Naive thymus-derived CD4-positive, alpha-beta T cell (primary cell): ENCODE measurements at regions of chr10 and their contacts with region 1.

Region 1: GRCh38 chr10:88091490-88092105 is 228.2 kb downstream of the PTEN start:
- DNase-seq: peak in 8 of 9 donors; percentile 64 to 85 (median 76)
- ATAC-seq: peak; percentile 95
- H3K4me3 ChIP-seq: no peak overlapping the region
- H3K4me3 Mint-ChIP-seq: peak overlapping the region; percentile 18 to 72 (median 52)
- H3K27ac ChIP-seq: peak overlapping the region; percentile 53
- H3K27ac Mint-ChIP-seq: peak overlapping the region; percentile 76 to 94 (median 90)
- H3K4me1 ChIP-seq: peaks cover 33 to 36% of the 10 kb centered on the region in 2 donors
- H3K4me1 Mint-ChIP-seq: peaks cover 35 to 64% (median 42%) of the 10 kb centered on the region in 7 donors
- H3K27me3 ChIP-seq: no peaks in the 10 kb centered on the region
- H3K27me3 Mint-ChIP-seq: peaks cover 0 to 49% (median 0%) of the 10 kb centered on the region in 5 donors

Region 2: DNA sequence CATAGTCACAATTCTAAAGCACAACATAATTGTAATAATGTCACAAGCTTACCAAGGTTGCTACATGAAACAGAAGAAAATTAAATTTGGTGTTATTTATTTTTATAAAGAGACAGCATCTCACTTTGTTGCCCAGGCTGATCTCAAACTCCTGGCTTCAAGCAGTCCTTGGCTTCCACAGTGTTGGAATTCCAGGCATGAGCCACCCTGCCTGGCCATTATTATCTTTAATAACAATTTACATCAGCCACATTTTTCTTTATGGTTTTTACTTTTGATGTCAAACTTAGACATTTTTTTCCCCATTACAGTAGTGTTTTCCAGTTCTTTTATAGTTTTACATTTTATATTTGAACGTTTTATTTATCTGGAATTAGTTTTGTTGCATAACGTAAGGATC is 1288.4 kb before region 1 on chr10:
- CTCF ChIA-PET with region 1: no interaction called
- POLR2A ChIA-PET with region 1: no interaction called
- intact Hi-C with region 1: no loop called
- DNase-seq: no peak
- ATAC-seq: no peak
- H3K4me3 ChIP-seq: no peak overlapping the region
- H3K4me3 Mint-ChIP-seq: no peak overlapping the region
- H3K27ac ChIP-seq: no peak overlapping the region
- H3K27ac Mint-ChIP-seq: no peak overlapping the region
- H3K4me1 ChIP-seq: no peaks in the 10 kb centered on the region
- H3K4me1 Mint-ChIP-seq: peaks cover 0 to 15% (median 12%) of the 10 kb centered on the region in 7 donors
- H3K27me3 ChIP-seq: no peaks in the 10 kb centered on the region
- H3K27me3 Mint-ChIP-seq: no peaks in the 10 kb centered on the region

Region 3: DNA sequence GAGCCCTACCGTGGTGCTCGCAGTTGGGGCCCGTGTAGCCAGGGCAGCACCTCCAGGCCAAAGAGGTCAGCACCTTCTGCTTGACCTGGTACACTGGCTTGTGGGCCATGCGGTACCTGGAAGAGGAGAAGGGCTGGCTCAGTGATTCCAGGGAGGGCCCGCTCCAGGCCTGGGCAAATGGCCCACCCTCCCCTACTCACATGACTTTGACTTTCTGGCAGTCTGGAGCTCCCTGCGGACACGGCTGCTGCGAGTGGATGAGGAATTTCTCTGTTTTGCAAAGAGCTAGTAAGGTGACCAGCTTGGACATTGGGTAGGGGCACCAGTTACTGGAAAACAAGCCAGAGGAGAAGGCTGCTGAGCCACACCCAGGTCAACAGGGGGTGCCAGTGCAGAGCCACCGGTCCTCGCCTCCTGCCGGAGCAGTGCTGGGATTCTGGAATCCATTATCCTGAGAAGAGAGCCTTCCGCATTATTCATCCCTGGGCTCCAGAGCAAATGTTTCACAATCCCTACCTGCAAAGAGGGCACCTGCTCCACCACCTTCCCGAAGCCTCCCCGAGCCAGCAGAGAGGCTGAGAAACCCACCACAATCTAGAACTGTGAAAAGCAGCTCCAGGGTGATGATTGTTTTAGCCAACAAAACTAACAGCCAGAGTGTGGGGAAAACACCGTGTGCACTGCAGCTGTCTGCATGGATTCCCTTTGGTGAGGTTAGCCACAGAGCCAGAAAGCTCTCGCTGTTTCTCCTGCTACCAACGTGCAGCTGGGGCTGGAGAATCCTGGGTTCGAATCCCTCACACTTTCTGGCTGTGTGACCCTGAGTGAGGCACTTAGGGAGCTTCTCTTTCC is 1146.0 kb before region 1 on chr10:
- CTCF ChIA-PET with region 1: no interaction called
- POLR2A ChIA-PET with region 1: no interaction called
- intact Hi-C with region 1: no loop called
- DNase-seq: peak in 1 of 9 donors; percentile 10
- ATAC-seq: no peak
- H3K4me3 ChIP-seq: no peak overlapping the region
- H3K4me3 Mint-ChIP-seq: peak overlapping the region in 2 of 10 donors; percentile 20 to 31
- H3K27ac ChIP-seq: no peak overlapping the region
- H3K27ac Mint-ChIP-seq: no peak overlapping the region
- H3K4me1 ChIP-seq: peaks cover 0 to 9% of the 10 kb centered on the region in 2 donors
- H3K4me1 Mint-ChIP-seq: peaks cover 16 to 38% (median 20%) of the 10 kb centered on the region in 7 donors
- H3K27me3 ChIP-seq: no peaks in the 10 kb centered on the region
- H3K27me3 Mint-ChIP-seq: peaks cover 0 to 6% (median 0%) of the 10 kb centered on the region in 5 donors

Region 4: GRCh38 chr10:87973635-87974034 is 118.0 kb before region 1 on chr10:
- CTCF ChIA-PET with region 1: no interaction called
- POLR2A ChIA-PET with region 1: interaction called, 3 read pairs
- intact Hi-C with region 1: loop called in 1 of 2 experiments (anchors 5 kb)
- DNase-seq: no peak
- ATAC-seq: no peak
- H3K4me3 ChIP-seq: no peak overlapping the region
- H3K4me3 Mint-ChIP-seq: no peak overlapping the region
- H3K27ac ChIP-seq: no peak overlapping the region
- H3K27ac Mint-ChIP-seq: no peak overlapping the region
- H3K4me1 ChIP-seq: no peaks in the 10 kb centered on the region
- H3K4me1 Mint-ChIP-seq: peaks cover 0 to 21% (median 3%) of the 10 kb centered on the region in 7 donors
- H3K27me3 ChIP-seq: no peaks in the 10 kb centered on the region
- H3K27me3 Mint-ChIP-seq: no peaks in the 10 kb centered on the region

Region 5: GRCh38 chr10:88114368-88114767 is 22.8 kb after region 1 on chr10:
- CTCF ChIA-PET with region 1: interaction called, 9 read pairs
- POLR2A ChIA-PET with region 1: interaction called, 3 read pairs
- intact Hi-C with region 1: loop called in 1 of 2 experiments (anchors 1 kb)
- DNase-seq: peak in 5 of 9 donors; percentile 11 to 48 (median 37)
- ATAC-seq: peak; percentile 74
- H3K4me3 ChIP-seq: no peak overlapping the region
- H3K4me3 Mint-ChIP-seq: peak overlapping the region in 5 of 10 donors; percentile 3 to 52 (median 32)
- H3K27ac ChIP-seq: no peak overlapping the region
- H3K27ac Mint-ChIP-seq: no peak overlapping the region
- H3K4me1 ChIP-seq: peaks cover 11 to 26% of the 10 kb centered on the region in 2 donors
- H3K4me1 Mint-ChIP-seq: peaks cover 4 to 32% (median 15%) of the 10 kb centered on the region in 7 donors
- H3K27me3 ChIP-seq: no peaks in the 10 kb centered on the region
- H3K27me3 Mint-ChIP-seq: peaks cover 0 to 12% (median 0%) of the 10 kb centered on the region in 5 donors

Region 6: DNA sequence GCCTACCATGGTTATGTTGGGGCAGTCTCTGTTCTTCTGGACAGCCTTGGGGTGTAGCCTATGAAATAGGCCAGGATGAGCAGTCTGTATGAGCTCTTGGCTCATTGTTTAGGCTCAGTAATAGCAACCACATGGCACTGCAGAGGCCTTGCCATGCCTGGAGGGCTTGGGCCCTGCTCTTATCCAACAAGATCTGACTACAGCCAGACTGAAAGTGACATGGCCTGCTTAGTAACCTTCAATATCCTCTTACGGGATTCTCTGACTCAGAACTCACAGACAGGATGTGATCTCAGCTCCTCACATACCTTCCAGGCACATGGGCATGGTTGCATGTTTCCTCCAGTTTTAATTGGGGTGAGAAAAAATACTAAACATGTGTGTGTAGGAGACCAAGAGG is 61.1 kb after region 1 on chr10:
- CTCF ChIA-PET with region 1: no interaction called
- POLR2A ChIA-PET with region 1: no interaction called
- intact Hi-C with region 1: loop called in 1 of 2 experiments (anchors 1 kb)
- DNase-seq: peak in 5 of 9 donors; percentile 3 to 38 (median 10)
- ATAC-seq: peak; percentile 66
- H3K4me3 ChIP-seq: no peak overlapping the region
- H3K4me3 Mint-ChIP-seq: peak overlapping the region in 1 of 10 donors; percentile 67
- H3K27ac ChIP-seq: no peak overlapping the region
- H3K27ac Mint-ChIP-seq: peak overlapping the region in 4 of 9 donors; percentile 4 to 91 (median 79)
- H3K4me1 ChIP-seq: no peaks in the 10 kb centered on the region
- H3K4me1 Mint-ChIP-seq: peaks cover 4 to 25% (median 13%) of the 10 kb centered on the region in 7 donors
- H3K27me3 ChIP-seq: no peaks in the 10 kb centered on the region
- H3K27me3 Mint-ChIP-seq: no peaks in the 10 kb centered on the region

Region 7: GRCh38 chr10:88186335-88186734 is 94.7 kb after region 1 on chr10:
- CTCF ChIA-PET with region 1: no interaction called
- POLR2A ChIA-PET with region 1: no interaction called
- intact Hi-C with region 1: no loop called
- DNase-seq: no peak
- ATAC-seq: no peak
- H3K4me3 ChIP-seq: no peak overlapping the region
- H3K4me3 Mint-ChIP-seq: no peak overlapping the region
- H3K27ac ChIP-seq: no peak overlapping the region
- H3K27ac Mint-ChIP-seq: no peak overlapping the region
- H3K4me1 ChIP-seq: no peaks in the 10 kb centered on the region
- H3K4me1 Mint-ChIP-seq: peaks cover 0 to 13% (median 4%) of the 10 kb centered on the region in 7 donors
- H3K27me3 ChIP-seq: no peaks in the 10 kb centered on the region
- H3K27me3 Mint-ChIP-seq: peaks cover 0 to 15% (median 0%) of the 10 kb centered on the region in 5 donors

Region 8: DNA sequence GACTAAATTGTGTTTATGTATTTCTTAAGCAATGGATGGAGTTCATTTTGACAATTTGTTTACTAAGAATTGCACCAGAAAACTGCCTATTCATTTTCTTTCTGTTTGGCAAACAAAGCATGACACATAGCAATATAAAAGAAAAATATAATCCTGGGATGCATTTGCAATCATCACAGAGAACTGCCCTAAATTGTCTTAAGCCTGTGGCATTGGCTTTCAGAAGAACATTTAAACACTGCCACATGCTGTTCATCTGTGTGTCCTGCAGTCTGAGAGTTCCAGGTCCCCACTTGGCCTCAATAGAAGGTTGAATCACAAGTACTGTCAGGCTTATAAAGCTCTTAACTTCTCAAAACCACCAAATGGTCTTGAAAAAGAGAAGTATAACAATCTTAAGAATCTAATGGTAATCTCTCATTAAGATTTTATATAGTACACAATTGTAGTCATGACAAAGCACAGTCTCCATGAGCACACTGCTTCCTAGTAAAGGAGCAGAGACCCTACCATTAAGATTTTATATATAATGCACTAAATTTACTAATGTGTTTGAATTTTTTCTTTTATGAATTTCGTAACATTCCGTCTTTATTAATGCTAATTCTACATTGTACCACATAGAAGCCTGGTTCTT is 461.6 kb after region 1 on chr10:
- CTCF ChIA-PET with region 1: interaction called, 3 read pairs
- POLR2A ChIA-PET with region 1: no interaction called
- intact Hi-C with region 1: loop called in 1 of 2 experiments (anchors 5 kb)
- DNase-seq: peak in 7 of 9 donors; percentile 26 to 59 (median 53)
- ATAC-seq: peak; percentile 89
- H3K4me3 ChIP-seq: no peak overlapping the region
- H3K4me3 Mint-ChIP-seq: no peak overlapping the region
- H3K27ac ChIP-seq: no peak overlapping the region
- H3K27ac Mint-ChIP-seq: no peak overlapping the region
- H3K4me1 ChIP-seq: no peaks in the 10 kb centered on the region
- H3K4me1 Mint-ChIP-seq: peaks cover 0 to 2% (median 0%) of the 10 kb centered on the region in 7 donors
- H3K27me3 ChIP-seq: no peaks in the 10 kb centered on the region
- H3K27me3 Mint-ChIP-seq: peaks cover 0 to 11% (median 0%) of the 10 kb centered on the region in 5 donors